Naive thymus-derived CD8-positive, alpha-beta T cell (primary cell): ENCODE measurements at regions of chr2 and their contacts with region 1.

Region 1: DNA sequence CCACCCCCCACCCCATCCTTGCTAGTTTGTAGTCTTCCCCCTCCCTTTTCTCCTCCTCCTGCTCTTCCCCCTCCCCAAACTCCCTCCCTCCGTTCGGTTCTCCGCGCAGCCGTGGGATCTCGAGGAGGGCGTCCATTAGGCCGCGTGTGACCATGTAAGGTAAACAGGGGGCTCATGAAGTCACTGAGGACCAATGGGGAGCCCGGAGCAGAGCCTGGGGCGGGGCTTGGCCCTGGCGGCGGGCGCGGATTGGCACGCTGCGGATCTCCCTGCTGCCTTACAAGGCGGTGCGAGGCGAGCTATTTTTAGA is 246 bp upstream of the KLF7 start:
- DNase-seq: peak; percentile 85 to 99 (median 98)
- ATAC-seq: peak; percentile 83 to 86
- H3K4me3 Mint-ChIP-seq: peak overlapping the region; percentile 91 to 99 (median 96)
- H3K27ac Mint-ChIP-seq: peak overlapping the region; percentile 95 to 100 (median 98)
- H3K4me1 Mint-ChIP-seq: peaks cover 27 to 59% (median 44%) of the 10 kb centered on the region in 4 donors
- H3K27me3 Mint-ChIP-seq: no peaks in the 10 kb centered on the region

Region 2: GRCh38 chr2:206920951-206921350 is 245.0 kb before region 1 on chr2:
- POLR2A ChIA-PET with region 1: no interaction called
- DNase-seq: no peak
- ATAC-seq: no peak
- H3K4me3 Mint-ChIP-seq: no peak overlapping the region
- H3K27ac Mint-ChIP-seq: no peak overlapping the region
- H3K4me1 Mint-ChIP-seq: no peaks in the 10 kb centered on the region
- H3K27me3 Mint-ChIP-seq: peaks cover 0 to 9% (median 5%) of the 10 kb centered on the region in 5 donors

Region 3: DNA sequence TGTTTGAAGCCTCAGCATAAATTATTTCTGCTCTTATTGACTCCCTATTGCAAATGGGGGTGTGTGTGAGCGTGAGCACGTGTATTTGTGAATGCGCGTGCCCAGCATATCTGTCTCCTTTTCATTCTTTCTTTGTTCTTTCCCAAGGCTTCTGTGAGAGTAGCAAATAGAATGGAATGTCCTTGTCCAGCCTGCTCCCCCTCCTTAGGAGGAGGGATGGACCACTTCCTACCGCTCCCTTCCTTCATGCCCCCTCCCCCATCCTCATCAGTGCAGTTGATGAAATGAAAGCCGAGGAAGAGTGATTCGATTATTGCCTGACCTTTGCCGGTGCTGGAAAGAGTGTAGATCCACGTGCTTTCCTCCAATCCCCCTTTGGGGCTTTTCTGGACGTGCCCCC is 124.7 kb before region 1 on chr2:
- POLR2A ChIA-PET with region 1: no interaction called
- DNase-seq: no peak
- ATAC-seq: no peak
- H3K4me3 Mint-ChIP-seq: no peak overlapping the region
- H3K27ac Mint-ChIP-seq: no peak overlapping the region
- H3K4me1 Mint-ChIP-seq: peaks cover 0 to 6% (median 1%) of the 10 kb centered on the region in 4 donors
- H3K27me3 Mint-ChIP-seq: peaks cover 0 to 14% (median 6%) of the 10 kb centered on the region in 5 donors

Region 4: GRCh38 chr2:207073801-207074678 is 92.0 kb before region 1 on chr2:
- POLR2A ChIA-PET with region 1: interaction called, 24 read pairs
- DNase-seq: peak in 2 of 10 donors; percentile 11 to 29
- ATAC-seq: peak; percentile 64 to 70
- H3K4me3 Mint-ChIP-seq: peak overlapping the region; percentile 21 to 74 (median 56)
- H3K27ac Mint-ChIP-seq: peak overlapping the region in 9 of 10 donors; percentile 5 to 91 (median 73)
- H3K4me1 Mint-ChIP-seq: peaks cover 27 to 37% (median 33%) of the 10 kb centered on the region in 4 donors
- H3K27me3 Mint-ChIP-seq: peaks cover 0 to 3% (median 2%) of the 10 kb centered on the region in 5 donors

Region 5: GRCh38 chr2:207107551-207107950 is 58.4 kb before region 1 on chr2:
- POLR2A ChIA-PET with region 1: interaction called, 10 read pairs
- DNase-seq: peak in 5 of 10 donors; percentile 3 to 30 (median 22)
- ATAC-seq: peak in 1 of 2 donors; percentile 82
- H3K4me3 Mint-ChIP-seq: peak overlapping the region in 7 of 10 donors; percentile 4 to 64 (median 17)
- H3K27ac Mint-ChIP-seq: peak overlapping the region in 8 of 10 donors; percentile 6 to 81 (median 46)
- H3K4me1 Mint-ChIP-seq: peaks cover 30 to 72% (median 50%) of the 10 kb centered on the region in 4 donors
- H3K27me3 Mint-ChIP-seq: no peaks in the 10 kb centered on the region

Region 6: DNA sequence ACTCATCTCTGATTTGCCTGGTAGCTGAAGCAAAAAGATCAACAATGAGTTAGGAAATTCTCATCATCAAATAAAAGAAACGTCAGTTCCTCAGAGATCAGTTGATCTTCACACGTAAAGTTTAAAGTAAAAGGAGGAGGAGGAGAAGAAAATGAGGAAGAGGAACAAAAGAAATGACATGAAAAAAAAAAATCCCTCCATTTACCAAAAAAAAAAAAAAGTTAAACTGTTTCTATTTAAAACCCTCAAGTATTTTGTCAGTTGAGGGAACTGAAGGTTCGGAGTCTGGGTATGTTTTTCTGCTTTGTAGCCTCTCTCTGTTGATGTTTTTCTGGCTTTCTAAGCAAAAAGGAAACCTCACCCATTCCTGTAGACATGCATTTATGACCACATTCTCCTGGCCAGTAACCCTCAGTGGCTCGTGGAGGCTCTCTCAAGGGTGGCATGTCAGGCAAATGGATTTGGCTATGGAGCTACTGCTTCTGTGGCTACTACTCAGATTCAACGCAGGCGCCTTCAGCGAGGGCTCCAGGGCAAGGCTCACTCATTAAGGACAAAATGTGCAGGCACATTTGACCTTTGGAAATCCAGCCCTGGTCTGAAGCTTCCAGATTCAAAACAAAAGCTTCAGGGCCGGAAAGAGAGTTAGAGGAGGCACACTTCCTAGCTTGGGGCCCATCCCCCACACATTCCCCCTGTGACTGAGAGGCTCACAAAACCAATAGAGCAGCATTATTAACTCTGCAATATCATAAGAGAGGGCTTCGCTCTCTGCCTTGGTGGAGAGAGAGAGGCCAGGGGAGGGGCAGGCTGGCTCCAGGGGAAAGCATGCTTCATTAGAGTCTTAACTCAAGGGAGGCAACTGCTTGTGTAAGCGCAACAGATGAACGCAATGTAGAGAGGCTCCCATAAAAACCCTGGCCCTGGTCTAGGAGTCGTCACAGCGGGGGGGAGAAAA is 22.5 kb before region 1 on chr2:
- POLR2A ChIA-PET with region 1: interaction called, 399 read pairs
- DNase-seq: peak; percentile 42 to 88 (median 68)
- ATAC-seq: peak; percentile 76 to 79
- H3K4me3 Mint-ChIP-seq: peak overlapping the region; percentile 70 to 89 (median 82)
- H3K27ac Mint-ChIP-seq: peak overlapping the region; percentile 92 to 98 (median 96)
- H3K4me1 Mint-ChIP-seq: peaks cover 42 to 85% (median 83%) of the 10 kb centered on the region in 4 donors
- H3K27me3 Mint-ChIP-seq: no peaks in the 10 kb centered on the region

Region 7: DNA sequence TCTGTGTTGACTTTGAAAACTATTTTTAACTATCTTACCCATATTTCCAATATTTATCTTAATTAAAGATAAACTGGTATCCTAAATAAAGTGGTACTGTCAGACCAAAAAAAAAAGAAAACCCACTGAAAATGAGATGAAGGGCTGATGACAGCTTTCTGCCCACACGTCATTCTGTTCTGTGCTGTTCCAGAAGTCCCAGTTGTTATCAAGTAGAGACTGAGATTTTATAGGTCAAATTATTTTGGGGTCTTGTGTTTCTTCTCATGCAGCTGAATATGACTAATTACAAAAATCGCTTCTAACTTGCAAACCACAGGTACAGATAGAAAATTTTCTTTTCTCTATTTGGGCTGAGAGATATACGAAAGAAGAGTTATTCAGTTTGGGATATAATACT is 48.5 kb after region 1 on chr2:
- POLR2A ChIA-PET with region 1: no interaction called
- DNase-seq: no peak
- ATAC-seq: no peak
- H3K4me3 Mint-ChIP-seq: no peak overlapping the region
- H3K27ac Mint-ChIP-seq: no peak overlapping the region
- H3K4me1 Mint-ChIP-seq: no peaks in the 10 kb centered on the region
- H3K27me3 Mint-ChIP-seq: no peaks in the 10 kb centered on the region

Region 8: GRCh38 chr2:207238831-207239701 is 73.1 kb after region 1 on chr2:
- POLR2A ChIA-PET with region 1: interaction called, 14 read pairs
- DNase-seq: no peak
- ATAC-seq: peak; percentile 31 to 44
- H3K4me3 Mint-ChIP-seq: peak overlapping the region in 7 of 10 donors; percentile 20 to 67 (median 37)
- H3K27ac Mint-ChIP-seq: peak overlapping the region in 5 of 10 donors; percentile 25 to 55 (median 53)
- H3K4me1 Mint-ChIP-seq: peaks cover 11 to 22% (median 20%) of the 10 kb centered on the region in 4 donors
- H3K27me3 Mint-ChIP-seq: no peaks in the 10 kb centered on the region